ENCODE measurements at regions of chr7 and their contacts with region 1.

Region 1: DNA sequence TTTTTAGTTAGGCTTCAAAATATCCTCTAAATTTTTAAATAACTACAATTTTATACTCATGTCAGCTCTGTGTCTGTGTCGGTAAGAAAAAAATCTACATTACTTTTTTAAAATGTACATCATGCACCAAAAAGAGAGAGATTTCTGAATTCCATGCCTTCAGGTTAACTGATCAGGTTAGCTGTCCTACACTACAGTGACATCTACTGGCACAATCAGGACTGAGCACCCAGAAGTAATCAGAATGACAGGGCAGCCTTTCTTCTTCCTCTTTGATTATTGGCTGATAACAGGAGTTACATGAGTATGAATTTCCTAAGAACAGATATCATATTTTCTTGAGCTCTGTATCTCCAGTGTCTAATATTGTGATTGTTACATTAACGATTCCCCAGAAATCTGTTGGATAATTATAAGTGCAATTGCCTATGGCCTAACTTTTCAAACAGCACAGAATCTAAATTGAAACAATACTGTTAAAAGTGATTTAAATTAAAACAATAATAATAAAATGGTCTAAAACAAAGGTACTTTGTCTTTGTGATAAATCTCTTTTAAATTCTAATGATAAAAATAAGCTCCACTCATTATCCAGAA is 41.8 kb upstream of the HYCC1 start:
- DNase-seq: peak in 1 of 3 donors; percentile 76
- ATAC-seq: peak; percentile 81
- H3K4me3 ChIP-seq: no peak overlapping the region
- H3K4me1 ChIP-seq: no peaks in the 10 kb centered on the region
- CTCF ChIP-seq: peak; percentile 60

Region 2: DNA sequence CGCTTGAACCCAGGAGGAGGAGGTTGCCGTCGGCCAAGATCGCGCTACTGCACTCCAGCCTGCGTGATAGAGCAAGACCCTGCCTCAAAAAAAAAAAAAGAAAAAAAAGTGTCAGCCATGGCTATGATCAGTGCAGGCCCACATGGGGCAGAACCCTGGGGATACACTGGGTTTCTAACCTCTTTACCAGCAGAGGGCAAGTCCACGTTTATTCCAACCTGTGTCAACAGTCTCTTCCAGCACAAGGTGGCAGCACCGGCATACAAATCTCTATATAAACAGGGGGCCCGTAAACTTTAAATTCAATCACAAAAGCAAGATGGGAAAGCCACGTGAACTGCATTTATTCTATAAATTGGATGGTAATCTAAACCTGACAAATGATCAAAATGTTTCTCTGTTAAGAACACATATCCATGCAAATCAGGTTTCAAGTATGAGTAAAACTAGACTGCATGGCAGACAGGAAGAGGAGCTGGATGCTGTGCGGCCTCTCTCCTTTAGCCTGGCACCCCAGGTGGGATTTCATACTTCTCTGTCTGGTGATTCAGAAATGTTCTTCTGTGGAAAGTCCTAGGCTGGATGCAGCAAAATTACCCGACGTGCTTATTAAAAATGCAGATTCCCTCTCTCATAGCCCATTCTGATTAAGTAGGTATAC is 495.7 kb before region 1 on chr7:
- intact Hi-C with region 1: loop called (anchors 10 kb)
- DNase-seq: peak in 2 of 3 donors; percentile 51 to 83
- ATAC-seq: peak; percentile 74
- H3K4me3 ChIP-seq: no peak overlapping the region
- H3K4me1 ChIP-seq: no peaks in the 10 kb centered on the region
- CTCF ChIP-seq: peak; percentile 43

Region 3: GRCh38 chr7:22732556-22733126 is 323.0 kb before region 1 on chr7:
- intact Hi-C with region 1: loop called in 1 of 2 experiments (anchors 10 kb)
- DNase-seq: no peak
- ATAC-seq: no peak
- H3K4me3 ChIP-seq: no peak overlapping the region
- H3K4me1 ChIP-seq: no peaks in the 10 kb centered on the region
- CTCF ChIP-seq: no peak

Measured in mucosa of descending colon (tissue), 3 donors.